ENCODE measurements at regions of chr1 and their contacts with region 1.

Region 1: GRCh38 chr1:31789259-31790065 is 25.3 kb upstream of the ADGRB2 start:
- DNase-seq: peak; percentile 86 to 92 (median 89)
- H3K4me3 ChIP-seq: peak overlapping the region; percentile 42 to 94 (median 78)
- H3K27ac ChIP-seq: no peak overlapping the region
- H3K4me1 ChIP-seq: peaks cover 0 to 17% (median 12%) of the 10 kb centered on the region in 4 experiments
- H3K27me3 ChIP-seq: peaks cover 0 to 7% (median 0%) of the 10 kb centered on the region in 5 experiments

Region 2: DNA sequence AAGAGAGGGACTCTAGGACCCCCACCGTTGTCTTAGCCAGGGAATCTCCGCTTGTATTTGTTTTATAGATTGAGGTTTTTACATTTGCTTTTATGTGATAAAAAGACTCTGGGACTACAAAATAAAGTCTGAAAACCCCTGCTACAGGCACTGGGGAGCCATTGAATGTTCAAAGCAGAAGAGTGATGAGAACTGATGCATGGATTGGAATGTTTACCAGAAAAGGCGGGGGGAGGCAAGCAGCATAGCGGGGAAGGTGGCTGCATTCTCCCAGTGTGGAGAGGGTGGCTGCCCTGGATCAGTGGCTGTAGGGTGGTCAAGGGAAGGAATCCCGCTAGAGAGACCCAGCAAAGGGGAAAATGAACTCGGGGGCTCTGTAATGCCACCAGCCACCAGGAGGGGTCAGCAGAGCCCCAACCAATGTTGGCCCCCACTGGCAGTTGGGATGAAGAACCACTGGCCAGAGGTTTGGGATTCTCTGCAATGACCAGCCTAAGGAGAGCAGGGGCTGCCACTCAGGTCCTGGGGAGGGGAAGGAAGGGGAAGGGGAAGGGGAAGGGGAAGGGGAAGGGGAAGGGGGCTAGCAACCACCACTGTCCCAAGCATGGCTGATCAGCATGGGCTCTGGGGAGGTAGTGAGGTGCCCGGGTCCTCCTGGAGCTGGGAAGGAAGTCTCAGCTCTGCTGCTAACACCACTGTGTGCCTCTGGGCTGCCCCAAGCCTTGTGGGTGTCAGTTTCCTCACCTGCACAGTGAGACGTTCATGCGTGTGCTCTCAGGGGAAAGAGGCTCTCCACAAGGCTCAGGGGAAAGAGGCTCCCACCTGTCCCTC is 125.6 kb before region 1 on chr1:
- CTCF ChIA-PET with region 1: interaction called, 20 read pairs
- POLR2A ChIA-PET with region 1: no interaction called
- DNase-seq: peak; percentile 14 to 38 (median 15)
- H3K4me3 ChIP-seq: no peak overlapping the region
- H3K27ac ChIP-seq: no peak overlapping the region
- H3K4me1 ChIP-seq: no peaks in the 10 kb centered on the region
- H3K27me3 ChIP-seq: no peaks in the 10 kb centered on the region

Region 3: DNA sequence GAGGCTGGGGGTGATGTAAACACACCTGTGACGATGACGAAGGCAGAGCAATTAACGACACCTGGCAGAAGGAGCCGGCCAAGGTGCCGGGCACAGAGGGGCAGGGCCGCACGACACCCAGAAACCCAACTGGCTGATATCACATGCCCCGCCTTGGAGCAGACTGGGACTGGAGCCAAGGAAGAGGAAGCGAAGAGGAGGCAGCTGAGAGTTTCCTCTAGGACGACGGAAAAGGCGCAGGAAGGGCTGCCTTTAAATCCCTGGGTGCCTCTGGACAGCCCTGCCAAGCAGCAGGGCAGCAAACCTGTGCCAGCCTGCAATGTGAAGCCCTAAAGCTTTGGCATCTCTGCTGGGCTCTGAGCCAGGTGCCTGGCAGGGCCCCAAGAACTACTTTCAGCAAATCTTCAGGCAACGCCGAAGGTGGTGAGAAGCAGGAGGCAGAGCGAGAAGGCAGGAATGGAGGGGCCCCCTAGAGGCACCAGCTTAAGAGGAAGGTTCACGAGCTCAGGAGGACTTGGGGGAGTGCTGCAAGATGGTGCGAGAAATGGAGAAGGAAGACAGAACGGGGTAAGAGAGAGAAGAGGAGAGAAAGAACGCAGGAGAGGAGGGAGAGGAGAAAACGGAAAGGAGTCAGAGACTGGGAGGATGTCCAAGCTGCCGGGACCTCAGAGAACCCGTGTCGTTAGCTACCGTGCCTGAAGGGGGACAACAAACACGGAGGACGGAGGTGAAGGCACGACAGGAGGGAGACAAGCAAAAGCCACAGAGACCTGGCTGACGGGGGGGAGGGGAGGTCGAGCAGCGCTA is 119.5 kb before region 1 on chr1:
- CTCF ChIA-PET with region 1: interaction called, 20 read pairs
- POLR2A ChIA-PET with region 1: interaction called, 4 read pairs
- DNase-seq: peak; percentile 83 to 92 (median 92)
- H3K4me3 ChIP-seq: peak overlapping the region in 5 of 7 experiments; percentile 13 to 59 (median 50)
- H3K27ac ChIP-seq: no peak overlapping the region
- H3K4me1 ChIP-seq: peaks cover 0 to 18% (median 13%) of the 10 kb centered on the region in 4 experiments
- H3K27me3 ChIP-seq: peaks cover 0 to 3% (median 0%) of the 10 kb centered on the region in 5 experiments

Region 4: GRCh38 chr1:31715087-31715872 is 74.2 kb before region 1 on chr1:
- CTCF ChIA-PET with region 1: interaction called, 13 read pairs
- POLR2A ChIA-PET with region 1: no interaction called
- DNase-seq: peak in 2 of 3 donors; percentile 31 to 36
- H3K4me3 ChIP-seq: peak overlapping the region in 6 of 7 experiments; percentile 5 to 71 (median 52)
- H3K27ac ChIP-seq: no peak overlapping the region
- H3K4me1 ChIP-seq: peaks cover 0 to 24% (median 13%) of the 10 kb centered on the region in 4 experiments
- H3K27me3 ChIP-seq: peaks cover 0 to 41% (median 15%) of the 10 kb centered on the region in 5 experiments

Region 5: DNA sequence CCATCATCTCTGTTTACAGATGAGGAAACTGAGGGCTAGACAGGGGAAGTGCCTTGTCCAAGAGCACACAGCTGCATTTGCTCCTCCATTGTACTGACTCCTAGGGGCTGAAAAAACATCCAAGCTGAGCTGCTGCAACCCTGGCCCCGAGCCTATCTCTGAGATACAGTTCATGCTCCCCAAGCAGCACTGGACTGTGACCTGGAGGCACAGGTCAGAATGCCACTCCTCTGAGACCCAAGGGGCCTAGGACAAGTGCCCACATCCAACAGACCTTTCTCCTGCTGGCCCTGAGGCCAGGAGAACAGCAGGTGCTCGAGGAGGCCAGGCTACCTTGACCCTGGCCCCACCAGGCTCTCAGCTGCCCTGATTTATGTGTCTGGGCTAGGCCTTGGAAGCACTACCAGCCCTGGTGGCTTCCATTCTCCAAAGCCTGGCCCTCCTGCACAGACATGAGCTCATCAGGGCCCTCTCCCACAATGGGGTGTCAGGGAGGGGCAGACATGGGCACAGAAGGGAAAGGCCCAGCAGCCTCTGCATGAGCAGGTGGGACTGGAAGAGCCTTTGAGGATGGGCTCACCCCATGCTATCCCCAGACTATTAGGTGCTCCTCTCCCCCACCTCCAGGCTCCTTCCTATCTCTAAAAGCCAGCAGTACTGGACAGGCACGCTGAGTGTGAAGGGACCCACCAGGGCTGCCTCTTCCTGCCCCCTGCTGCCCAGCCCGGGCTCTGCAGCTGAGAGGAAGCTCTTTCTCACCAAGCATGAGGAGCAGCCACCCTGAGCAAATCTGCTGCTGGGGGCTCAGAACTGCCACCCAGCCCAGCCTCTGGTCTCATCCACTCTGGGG is 44.1 kb before region 1 on chr1:
- CTCF ChIA-PET with region 1: interaction called, 10 read pairs
- POLR2A ChIA-PET with region 1: no interaction called
- DNase-seq: peak in 2 of 3 donors; percentile 71 to 72
- H3K4me3 ChIP-seq: no peak overlapping the region
- H3K27ac ChIP-seq: no peak overlapping the region
- H3K4me1 ChIP-seq: peaks cover 0 to 18% (median 9%) of the 10 kb centered on the region in 4 experiments
- H3K27me3 ChIP-seq: no peaks in the 10 kb centered on the region

Region 6: GRCh38 chr1:31762726-31763670 is 26.5 kb before region 1 on chr1:
- CTCF ChIA-PET with region 1: interaction called, 50 read pairs
- POLR2A ChIA-PET with region 1: interaction called, 3 read pairs
- DNase-seq: peak; percentile 65 to 77 (median 74)
- H3K4me3 ChIP-seq: peak overlapping the region in 5 of 7 experiments; percentile 40 to 63 (median 43)
- H3K27ac ChIP-seq: no peak overlapping the region
- H3K4me1 ChIP-seq: peaks cover 0 to 45% (median 31%) of the 10 kb centered on the region in 4 experiments
- H3K27me3 ChIP-seq: peaks cover 0 to 38% (median 19%) of the 10 kb centered on the region in 5 experiments

Region 7: GRCh38 chr1:31769720-31770390 is 19.6 kb before region 1 on chr1:
- CTCF ChIA-PET with region 1: interaction called, 50 read pairs
- POLR2A ChIA-PET with region 1: interaction called, 3 read pairs
- DNase-seq: no peak
- H3K4me3 ChIP-seq: no peak overlapping the region
- H3K27ac ChIP-seq: no peak overlapping the region
- H3K4me1 ChIP-seq: peaks cover 1 to 28% (median 19%) of the 10 kb centered on the region in 4 experiments
- H3K27me3 ChIP-seq: peaks cover 0 to 49% (median 41%) of the 10 kb centered on the region in 5 experiments

Region 8: GRCh38 chr1:31977385-31978131 is 188.1 kb after region 1 on chr1:
- CTCF ChIA-PET with region 1: no interaction called
- POLR2A ChIA-PET with region 1: no interaction called
- DNase-seq: peak; percentile 40 to 50 (median 45)
- H3K4me3 ChIP-seq: no peak overlapping the region
- H3K27ac ChIP-seq: no peak overlapping the region
- H3K4me1 ChIP-seq: peaks cover 2 to 20% (median 12%) of the 10 kb centered on the region in 4 experiments
- H3K27me3 ChIP-seq: no peaks in the 10 kb centered on the region

Measured in common myeloid progenitor, CD34-positive (primary cell).